Psoas muscle (tissue), 8 donors: ENCODE measurements at regions of chr9 and their contacts with region 1.

Region 1: GRCh38 chr9:105722099-105722498 is 27.8 kb downstream of the TMEM38B start:
- DNase-seq: no peak
- ATAC-seq: no peak
- H3K4me3 ChIP-seq: no peak overlapping the region
- H3K27ac ChIP-seq: no peak overlapping the region
- H3K4me1 ChIP-seq: peaks cover 3% of the 10 kb centered on the region
- H3K27me3 ChIP-seq: no peaks in the 10 kb centered on the region
- CTCF ChIP-seq: no peak

Region 2: GRCh38 chr9:105608721-105609598 is 113.1 kb before region 1 on chr9:
- intact Hi-C with region 1: loop called in 1 of 2 experiments (anchors 2 kb)
- DNase-seq: no peak
- ATAC-seq: peak in 3 of 4 donors; percentile 61 to 90 (median 80)
- H3K4me3 ChIP-seq: no peak overlapping the region
- H3K27ac ChIP-seq: no peak overlapping the region
- H3K4me1 ChIP-seq: no peaks in the 10 kb centered on the region
- H3K27me3 ChIP-seq: no peaks in the 10 kb centered on the region
- CTCF ChIP-seq: peak; percentile 70